Activated naive CD4-positive, alpha-beta T cell treated with anti-CD3 and anti-CD28 coated beads for 36 hours (primary cell): ENCODE measurements at regions of chr3 and their contacts with region 1.

Region 1: DNA sequence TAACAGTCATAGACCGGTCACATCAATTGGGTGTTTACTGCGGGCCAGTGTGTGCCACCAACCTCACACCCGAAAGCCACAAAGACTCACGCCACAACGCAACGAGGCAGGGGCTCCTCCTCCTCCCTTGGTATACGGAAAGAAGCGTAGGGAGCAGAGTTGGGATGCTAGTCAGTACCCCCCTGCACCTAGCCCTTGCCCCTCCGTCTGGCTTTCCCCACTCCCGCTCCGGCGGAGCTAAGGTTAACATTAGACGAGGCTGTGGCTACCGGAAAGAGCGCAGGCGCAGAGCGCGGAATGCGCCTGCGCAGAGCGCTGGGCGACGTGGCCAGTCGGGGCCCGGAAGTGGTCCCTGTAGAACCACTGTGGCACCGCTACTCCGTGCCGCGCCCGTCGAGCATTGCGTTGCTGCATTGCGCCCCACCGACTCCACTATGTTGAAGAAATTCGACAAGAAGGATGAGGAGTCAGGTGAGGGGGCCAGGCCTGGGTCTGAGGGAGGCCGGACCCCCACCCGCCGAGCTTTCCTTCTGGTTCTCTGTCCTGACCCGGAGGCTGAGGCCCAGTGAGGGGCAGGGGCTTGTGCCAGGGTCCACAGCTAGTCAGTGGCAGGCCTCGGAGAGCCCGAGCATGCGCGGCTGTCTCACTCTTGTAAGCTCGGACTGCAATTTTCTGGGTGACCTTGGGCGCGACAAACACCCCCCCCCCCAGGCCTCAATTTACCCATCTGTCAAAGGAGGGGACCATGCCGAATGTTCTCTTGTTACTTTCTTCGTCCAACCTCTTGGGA is at the start of gene COPG1:
- DNase-seq: peak; percentile 86
- H3K4me3 Mint-ChIP-seq: peak within 1 kb of the TSS; percentile 95
- H3K27ac Mint-ChIP-seq: peak within 1 kb of the TSS; percentile 89
- H3K4me1 Mint-ChIP-seq: peaks cover 33% of the 10 kb centered on the region
- H3K27me3 Mint-ChIP-seq: no peaks in the 10 kb centered on the region
- total RNA-seq, gene COPG1: 125 to 128 TPM

Region 2: GRCh38 chr3:129016356-129016719 is 233.1 kb before region 1 on chr3:
- CTCF ChIA-PET with region 1: interaction called, 22 read pairs
- intact Hi-C with region 1: no loop called
- DNase-seq: peak; percentile 88
- H3K4me3 Mint-ChIP-seq: peak overlapping the region; percentile 73
- H3K27ac Mint-ChIP-seq: peak overlapping the region; percentile 95
- H3K4me1 Mint-ChIP-seq: peaks cover 38% of the 10 kb centered on the region
- H3K27me3 Mint-ChIP-seq: no peaks in the 10 kb centered on the region

Region 3: GRCh38 chr3:129183569-129184395 is 65.7 kb before region 1 on chr3 and contains the start of gene CNBP:
- CTCF ChIA-PET with region 1: interaction called, 14 read pairs
- intact Hi-C with region 1: loop called (anchors 1 kb)
- DNase-seq: peak; percentile 93
- H3K4me3 Mint-ChIP-seq: peak within 1 kb of the TSS; percentile 96
- H3K27ac Mint-ChIP-seq: peak within 1 kb of the TSS; percentile 95
- H3K4me1 Mint-ChIP-seq: peaks cover 35% of the 10 kb centered on the region
- H3K27me3 Mint-ChIP-seq: no peaks in the 10 kb centered on the region
- total RNA-seq, gene CNBP: 490 to 500 TPM

Region 4: GRCh38 chr3:129195731-129196256 is 53.7 kb before region 1 on chr3:
- CTCF ChIA-PET with region 1: no interaction called
- intact Hi-C with region 1: no loop called
- DNase-seq: no peak
- H3K4me3 Mint-ChIP-seq: no peak overlapping the region
- H3K27ac Mint-ChIP-seq: no peak overlapping the region
- H3K4me1 Mint-ChIP-seq: no peaks in the 10 kb centered on the region
- H3K27me3 Mint-ChIP-seq: no peaks in the 10 kb centered on the region

Region 5: GRCh38 chr3:129278439-129278970 is 29.0 kb after region 1 on chr3 and contains the start of gene HMCES:
- CTCF ChIA-PET with region 1: no interaction called
- intact Hi-C with region 1: loop called (anchors 1 kb)
- DNase-seq: peak; percentile 96
- H3K4me3 Mint-ChIP-seq: peak within 1 kb of the TSS; percentile 87
- H3K27ac Mint-ChIP-seq: peak within 1 kb of the TSS; percentile 90
- H3K4me1 Mint-ChIP-seq: peaks cover 48% of the 10 kb centered on the region
- H3K27me3 Mint-ChIP-seq: no peaks in the 10 kb centered on the region
- total RNA-seq, gene HMCES: 35.0 to 35.8 TPM

Region 6: GRCh38 chr3:129576514-129577352 is 327.3 kb after region 1 on chr3:
- CTCF ChIA-PET with region 1: no interaction called
- intact Hi-C with region 1: no loop called
- DNase-seq: peak; percentile 55
- H3K4me3 Mint-ChIP-seq: no peak overlapping the region
- H3K27ac Mint-ChIP-seq: no peak overlapping the region
- H3K4me1 Mint-ChIP-seq: peaks cover 21% of the 10 kb centered on the region
- H3K27me3 Mint-ChIP-seq: no peaks in the 10 kb centered on the region